CD14-positive monocyte (primary cell): ENCODE measurements at regions of chr20 and their contacts with region 1.

Region 1: DNA sequence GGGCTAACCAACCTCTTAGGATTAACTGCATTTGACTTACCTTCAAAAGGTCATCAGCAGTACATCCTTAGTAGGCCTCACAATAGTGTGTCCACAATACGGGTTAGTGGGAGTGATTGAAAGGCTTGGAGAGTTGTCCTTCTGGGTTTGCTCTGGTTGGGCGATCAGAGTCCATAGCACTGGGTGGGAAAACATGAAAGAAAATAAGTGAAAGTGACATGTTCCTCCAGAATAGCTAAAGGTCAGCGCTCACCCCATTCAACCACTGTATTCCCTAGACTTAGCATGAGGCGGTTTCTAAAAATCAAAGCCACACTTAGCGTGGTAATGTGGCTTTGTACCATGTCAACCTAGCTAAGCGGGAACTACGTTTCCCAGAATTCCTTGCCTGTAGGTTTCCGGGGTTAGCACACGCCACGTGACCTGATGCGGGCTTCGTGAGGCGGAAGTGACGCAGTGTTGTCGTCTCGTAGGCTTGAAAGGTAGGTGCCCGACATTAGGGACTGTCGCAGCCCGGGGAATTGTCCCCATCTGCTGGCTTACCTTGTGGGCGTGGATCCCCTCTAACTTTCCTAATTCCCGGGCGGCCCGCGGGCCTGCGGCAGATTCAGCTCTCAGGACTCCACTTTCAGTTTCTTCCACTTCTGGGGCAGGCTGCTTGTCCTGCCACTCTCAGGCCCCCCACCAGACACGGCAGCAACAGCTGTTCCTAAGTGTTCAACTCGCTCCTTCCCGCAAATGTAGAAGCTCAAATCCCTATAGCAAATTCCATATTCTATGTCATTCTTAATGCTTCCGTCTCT is 19.8 kb upstream of the SCP2D1 start:
- DNase-seq: peak; percentile 90 to 97 (median 94)
- H3K4me3 ChIP-seq: peak overlapping the region; percentile 87 to 96 (median 91)
- H3K4me3 Mint-ChIP-seq: peak overlapping the region; percentile 85 to 95
- H3K27ac ChIP-seq: peak overlapping the region; percentile 71 to 98
- H3K27ac Mint-ChIP-seq: peak overlapping the region; percentile 94 to 99 (median 98)
- H3K4me1 ChIP-seq: peaks cover 6% of the 10 kb centered on the region in 2 donors
- H3K4me1 Mint-ChIP-seq: peaks cover 8% of the 10 kb centered on the region
- H3K27me3 ChIP-seq: peaks cover 0 to 11% of the 10 kb centered on the region in 2 donors
- H3K27me3 Mint-ChIP-seq: peaks cover 0 to 22% (median 7%) of the 10 kb centered on the region in 3 donors
- CTCF ChIP-seq: no peak

Region 2: DNA sequence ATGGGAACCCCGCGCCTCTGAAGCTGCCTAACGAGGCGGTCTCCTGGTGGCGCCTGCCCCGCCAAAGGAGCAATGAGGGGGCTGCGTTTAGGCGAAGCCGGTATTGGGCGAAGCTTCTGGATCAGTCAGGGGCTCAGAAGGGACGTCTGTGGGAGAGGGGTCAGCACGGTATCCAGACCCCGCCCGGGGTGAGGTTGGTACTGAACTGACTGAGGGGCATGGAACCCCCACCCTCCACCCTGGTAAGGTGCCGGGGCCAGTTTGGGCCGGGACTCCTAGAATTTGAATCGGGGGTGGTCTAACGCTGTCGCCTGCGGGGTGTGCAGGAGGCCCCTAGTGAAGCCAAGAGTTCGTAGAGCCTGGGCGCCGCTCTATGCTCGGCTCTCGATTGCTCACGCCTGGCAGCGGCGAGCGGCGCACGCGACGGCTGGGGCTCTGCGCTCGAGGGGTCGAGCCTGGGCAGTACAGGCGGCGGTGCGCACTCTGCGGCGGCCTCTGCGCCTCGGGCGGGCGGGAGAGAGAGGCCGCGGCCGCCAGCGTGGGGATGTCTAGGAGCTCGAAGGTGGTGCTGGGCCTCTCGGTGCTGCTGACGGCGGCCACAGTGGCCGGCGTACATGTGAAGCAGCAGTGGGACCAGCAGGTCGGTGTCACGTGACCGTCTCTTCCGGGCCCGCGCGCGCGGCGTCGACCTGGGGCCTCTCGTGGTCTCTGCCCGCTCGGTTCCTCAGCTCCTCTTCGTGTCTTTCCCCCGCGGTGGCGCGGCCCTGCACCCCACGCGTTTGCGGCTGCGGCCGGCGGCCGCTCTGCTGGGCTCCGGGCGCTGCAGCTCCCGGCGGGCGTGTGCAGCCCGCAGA is 656.2 kb before region 1 on chr20 and contains the starts of genes KAT14 and PET117:
- intact Hi-C with region 1: loop called (anchors 5 to 10 kb)
- DNase-seq: peak; percentile 80 to 89 (median 88)
- H3K4me3 ChIP-seq: peak within 1 kb of the TSS; percentile 48 to 99 (median 97)
- H3K4me3 Mint-ChIP-seq: peak within 1 kb of the TSS; percentile 94
- H3K27ac ChIP-seq: peak within 1 kb of the TSS; percentile 73 to 95
- H3K27ac Mint-ChIP-seq: peak within 1 kb of the TSS; percentile 78 to 93 (median 89)
- H3K4me1 ChIP-seq: peaks cover 16 to 25% of the 10 kb centered on the region in 2 donors
- H3K4me1 Mint-ChIP-seq: peaks cover 26% of the 10 kb centered on the region
- H3K27me3 ChIP-seq: no peaks in the 10 kb centered on the region
- H3K27me3 Mint-ChIP-seq: peaks cover 0 to 4% (median 3%) of the 10 kb centered on the region in 3 donors
- CTCF ChIP-seq: no peak
- polyA plus RNA-seq, gene KAT14: 3.4 to 6.0 (median 5.7) TPM
- polyA plus RNA-seq, gene PET117: 3.9 to 19.5 (median 16.6) TPM

Region 3: GRCh38 chr20:18566892-18567742 is 226.7 kb before region 1 on chr20 and contains the start of gene SMIM26:
- intact Hi-C with region 1: loop called in 1 of 2 experiments (anchors 10 kb)
- DNase-seq: peak; percentile 76 to 84 (median 83)
- H3K4me3 ChIP-seq: peak within 1 kb of the TSS; percentile 77 to 93 (median 79)
- H3K4me3 Mint-ChIP-seq: peak within 1 kb of the TSS; percentile 92
- H3K27ac ChIP-seq: peak within 1 kb of the TSS; percentile 56 to 95
- H3K27ac Mint-ChIP-seq: peak within 1 kb of the TSS; percentile 93 to 99 (median 97)
- H3K4me1 ChIP-seq: peaks cover 26 to 34% of the 10 kb centered on the region in 2 donors
- H3K4me1 Mint-ChIP-seq: peaks cover 28% of the 10 kb centered on the region
- H3K27me3 ChIP-seq: no peaks in the 10 kb centered on the region
- H3K27me3 Mint-ChIP-seq: peaks cover 0 to 2% (median 0%) of the 10 kb centered on the region in 3 donors
- CTCF ChIP-seq: no peak
- polyA plus RNA-seq, gene SMIM26: 101 to 206 (median 176) TPM

Region 4: DNA sequence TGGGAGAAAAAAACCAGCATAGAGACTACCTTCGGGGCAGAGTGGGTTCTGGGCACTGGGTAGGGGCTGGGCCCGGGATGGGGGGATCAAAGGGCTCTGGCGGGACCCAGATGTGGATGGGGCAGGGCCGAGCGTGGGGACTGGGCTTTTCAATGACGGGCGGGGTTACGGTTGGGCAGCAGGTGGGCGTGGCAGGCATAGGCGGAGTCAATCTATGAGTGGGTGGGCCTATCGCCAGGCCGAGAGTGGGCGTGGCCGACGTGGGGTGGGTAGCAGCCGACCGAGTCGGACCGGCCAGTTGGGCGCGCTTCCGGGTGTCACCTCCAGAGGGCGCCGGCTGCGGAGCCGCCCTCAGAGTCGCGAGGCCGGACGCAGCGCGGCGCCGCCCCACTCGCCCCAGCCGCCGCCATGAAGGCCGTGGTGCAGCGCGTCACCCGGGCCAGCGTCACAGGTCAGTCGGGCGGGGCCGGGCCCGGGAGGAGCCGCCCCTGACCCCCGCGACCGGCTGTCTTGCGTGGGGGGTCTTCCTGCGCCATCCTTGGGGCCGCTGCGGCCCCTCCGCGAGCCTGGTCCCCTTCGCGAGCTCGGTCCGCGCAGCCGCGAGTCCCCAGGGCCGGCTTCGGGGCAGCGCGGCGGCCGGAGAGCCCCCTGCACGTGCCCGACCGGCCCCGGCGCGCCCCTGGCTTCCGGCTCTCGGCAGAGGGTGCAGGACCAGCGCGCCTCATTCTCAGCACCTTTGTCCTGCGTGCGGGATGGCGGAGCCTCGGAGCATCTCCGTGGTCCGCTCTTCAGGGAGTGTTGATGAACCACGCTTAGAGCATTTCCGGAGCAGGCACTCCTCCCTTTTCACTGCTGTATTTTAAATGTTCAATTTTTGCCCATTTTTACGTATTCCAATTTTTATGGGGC is 205.9 kb before region 1 on chr20 and contains the start of gene DTD1:
- intact Hi-C with region 1: loop called in 1 of 2 experiments (anchors 10 kb)
- DNase-seq: peak; percentile 87 to 90 (median 88)
- H3K4me3 ChIP-seq: peak within 1 kb of the TSS; percentile 75 to 94 (median 77)
- H3K4me3 Mint-ChIP-seq: peak within 1 kb of the TSS; percentile 89 to 91
- H3K27ac ChIP-seq: peak within 1 kb of the TSS; percentile 16 to 58
- H3K27ac Mint-ChIP-seq: peak within 1 kb of the TSS in 6 of 7 donors; percentile 63 to 89 (median 85)
- H3K4me1 ChIP-seq: peaks cover 13 to 14% of the 10 kb centered on the region in 2 donors
- H3K4me1 Mint-ChIP-seq: peaks cover 15% of the 10 kb centered on the region
- H3K27me3 ChIP-seq: no peaks in the 10 kb centered on the region
- H3K27me3 Mint-ChIP-seq: peaks cover 2 to 7% (median 3%) of the 10 kb centered on the region in 3 donors
- CTCF ChIP-seq: peak; percentile 72
- polyA plus RNA-seq, gene DTD1: 18.8 to 33.6 (median 26.3) TPM

Region 5: DNA sequence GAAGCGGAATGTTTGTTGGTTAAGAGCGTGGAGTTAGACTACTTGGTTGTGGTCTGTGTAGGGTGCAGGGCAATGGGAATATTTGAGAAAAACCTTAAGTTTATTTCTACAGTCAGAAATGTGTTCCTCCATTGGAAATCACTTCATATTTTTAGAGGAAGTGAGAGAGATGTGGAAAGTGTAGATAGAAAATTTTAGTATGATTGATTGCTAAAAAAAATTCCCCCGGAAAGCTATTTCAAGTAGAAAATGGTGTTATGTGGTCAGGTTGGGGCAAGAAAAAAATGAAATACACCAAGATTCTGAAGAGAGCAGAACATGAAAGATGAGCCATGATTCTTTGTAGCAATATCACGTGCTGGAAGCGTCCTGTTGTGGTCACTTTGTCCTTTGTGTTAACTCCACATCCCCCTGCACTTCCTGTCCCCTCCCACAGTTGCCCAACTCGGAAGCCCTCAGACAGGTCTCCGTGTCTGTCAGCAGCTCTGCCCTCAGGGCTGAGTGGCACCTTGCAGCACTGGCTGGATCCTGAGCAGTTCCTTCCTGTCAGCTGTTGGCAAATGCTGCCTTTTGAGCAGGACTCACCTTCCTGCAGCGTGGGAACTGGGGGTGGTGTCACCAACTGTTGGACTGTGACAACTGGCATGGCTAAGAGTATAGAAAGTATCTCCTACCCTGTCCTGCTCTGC is 281.1 kb after region 1 on chr20:
- intact Hi-C with region 1: no loop called
- DNase-seq: peak; percentile 66 to 82 (median 80)
- H3K4me3 ChIP-seq: peak overlapping the region in 1 of 3 experiments; percentile 60
- H3K4me3 Mint-ChIP-seq: peak overlapping the region; percentile 61 to 68
- H3K27ac ChIP-seq: peak overlapping the region; percentile 34 to 62
- H3K27ac Mint-ChIP-seq: peak overlapping the region; percentile 35 to 88 (median 60)
- H3K4me1 ChIP-seq: peaks cover 48% of the 10 kb centered on the region in 2 donors
- H3K4me1 Mint-ChIP-seq: peaks cover 52% of the 10 kb centered on the region
- H3K27me3 ChIP-seq: no peaks in the 10 kb centered on the region
- H3K27me3 Mint-ChIP-seq: peaks cover 0 to 4% (median 2%) of the 10 kb centered on the region in 3 donors
- CTCF ChIP-seq: no peak